ENCODE measurements at regions of chr1 and their contacts with region 1.

Region 1: GRCh38 chr1:28197682-28198415 is 21.4 kb upstream of the PTAFR start:
- DNase-seq: no peak
- ATAC-seq: no peak
- H3K4me3 ChIP-seq: no peak overlapping the region
- H3K4me3 Mint-ChIP-seq: peak overlapping the region in 1 of 3 donors; percentile 24
- H3K27ac ChIP-seq: no peak overlapping the region
- H3K27ac Mint-ChIP-seq: no peak overlapping the region
- H3K4me1 ChIP-seq: peaks cover 10 to 80% of the 10 kb centered on the region in 2 experiments
- H3K4me1 Mint-ChIP-seq: peaks cover 37 to 43% (median 41%) of the 10 kb centered on the region in 3 donors
- H3K27me3 ChIP-seq: peaks cover 0 to 3% of the 10 kb centered on the region in 2 experiments
- H3K27me3 Mint-ChIP-seq: no peaks in the 10 kb centered on the region

Region 2: DNA sequence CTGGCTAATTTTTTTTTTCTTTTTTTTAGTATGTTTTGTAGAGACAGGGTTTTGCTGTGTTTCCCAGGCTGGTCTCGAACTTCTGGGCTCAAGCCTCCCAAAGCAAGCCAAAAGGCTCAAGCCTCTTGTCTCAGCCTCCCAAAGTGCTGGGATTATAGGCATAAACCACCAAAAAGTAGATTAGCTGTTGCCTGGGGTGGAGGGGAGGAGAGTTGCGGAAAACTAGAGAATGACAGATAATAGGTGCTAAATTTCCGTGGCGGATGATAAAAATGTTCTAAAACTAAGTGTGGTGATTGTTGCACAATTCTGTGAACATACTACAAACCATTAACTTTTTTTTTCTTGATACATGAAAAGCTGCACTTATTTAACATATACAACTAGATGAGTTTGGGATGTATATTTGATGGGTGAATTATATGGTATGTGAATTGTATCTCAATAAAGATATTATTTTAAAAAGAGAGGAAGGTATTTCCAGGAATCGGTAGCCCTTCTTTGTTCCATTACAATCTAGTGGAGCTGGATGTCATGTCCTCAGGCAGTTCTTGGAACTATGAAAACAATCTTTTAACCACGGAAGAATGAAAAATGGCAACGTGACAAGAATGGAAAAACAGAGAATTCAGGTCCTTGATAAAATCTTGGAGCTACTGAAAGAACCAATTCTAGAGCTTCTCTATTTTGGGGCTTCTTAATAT is 103.8 kb after region 1 on chr1:
- CTCF ChIA-PET with region 1: no interaction called
- POLR2A ChIA-PET with region 1: interaction called in 1 of 2 experiments, 12 read pairs
- DNase-seq: no peak
- ATAC-seq: no peak
- H3K4me3 ChIP-seq: no peak overlapping the region
- H3K4me3 Mint-ChIP-seq: no peak overlapping the region
- H3K27ac ChIP-seq: no peak overlapping the region
- H3K27ac Mint-ChIP-seq: no peak overlapping the region
- H3K4me1 ChIP-seq: no peaks in the 10 kb centered on the region
- H3K4me1 Mint-ChIP-seq: no peaks in the 10 kb centered on the region
- H3K27me3 ChIP-seq: peaks cover 0 to 13% of the 10 kb centered on the region in 2 experiments
- H3K27me3 Mint-ChIP-seq: peaks cover 0 to 2% of the 10 kb centered on the region in 2 donors